ENCODE measurements at regions of chr11 and their contacts with region 1.

Region 1: GRCh38 chr11:130139401-130139800 is 20.2 kb upstream of the ST14 start:
- DNase-seq: no peak
- H3K4me3 ChIP-seq: no peak overlapping the region
- CTCF ChIP-seq: no peak

Region 2: DNA sequence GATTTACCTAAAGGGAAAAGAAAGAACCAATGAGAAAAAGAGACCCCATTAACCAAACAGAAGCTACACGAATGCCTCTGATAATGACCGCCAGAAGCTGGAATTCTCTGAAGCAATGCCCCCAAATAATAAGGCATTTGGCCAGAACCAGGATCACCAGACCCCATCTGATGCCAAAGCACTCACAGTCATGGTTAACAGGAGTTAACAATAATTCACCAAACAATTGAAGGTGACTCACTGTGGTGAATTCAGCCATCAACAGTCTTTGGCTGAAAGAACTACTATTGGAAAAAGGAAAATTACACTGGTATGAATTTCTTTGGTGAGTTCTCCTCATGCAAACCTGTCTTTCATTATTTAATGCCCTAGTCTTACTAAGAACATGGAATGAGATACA is 222.2 kb before region 1 on chr11:
- in situ Hi-C with region 1: loop called (anchors 5 kb)
- DNase-seq: peak; percentile 58
- H3K4me3 ChIP-seq: no peak overlapping the region
- CTCF ChIP-seq: no peak

Measured in astrocyte of the cerebellum (primary cell).